ENCODE measurements at regions of chr15 and their contacts with region 1.

Region 1: DNA sequence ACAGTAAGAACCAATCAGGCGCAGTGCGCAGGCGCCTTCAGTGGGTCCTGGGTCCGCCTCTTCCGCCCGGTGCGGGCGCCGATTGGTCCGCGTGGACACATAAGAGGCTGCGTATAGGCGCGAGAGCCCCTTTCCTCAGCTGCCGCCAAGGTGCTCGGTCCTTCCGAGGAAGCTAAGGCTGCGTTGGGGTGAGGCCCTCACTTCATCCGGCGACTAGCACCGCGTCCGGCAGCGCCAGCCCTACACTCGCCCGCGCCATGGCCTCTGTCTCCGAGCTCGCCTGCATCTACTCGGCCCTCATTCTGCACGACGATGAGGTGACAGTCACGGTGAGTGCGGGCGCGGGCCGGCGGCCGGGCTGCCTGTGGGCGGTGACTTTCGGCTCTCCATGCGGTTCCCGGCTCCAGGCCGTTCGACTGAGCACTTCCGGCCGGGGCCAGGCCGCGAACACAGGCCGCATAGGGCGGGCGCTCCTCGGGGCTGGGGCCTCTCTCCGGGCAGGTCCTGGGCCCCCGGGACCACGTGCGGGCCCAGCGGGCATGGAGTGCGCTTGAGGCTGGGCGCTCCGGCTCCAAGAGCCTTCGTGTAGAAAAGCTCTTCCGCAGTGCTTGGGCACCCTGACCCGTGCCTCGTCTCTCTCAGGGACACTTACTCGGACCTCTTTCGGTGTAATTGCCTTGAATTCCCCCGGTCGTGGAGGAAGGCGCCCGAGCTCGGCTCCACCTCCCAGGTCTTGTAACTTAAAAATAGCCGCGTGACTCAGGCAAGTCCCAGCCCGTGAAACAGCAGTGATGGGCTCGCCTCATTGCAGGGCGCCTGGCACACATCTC is at the start of gene RPLP1:
- DNase-seq: peak; percentile 97
- H3K4me3 ChIP-seq: peak within 1 kb of the TSS; percentile 88 to 91
- H3K27ac ChIP-seq: peak within 1 kb of the TSS; percentile 94 to 95
- H3K4me1 ChIP-seq: peaks cover 10 to 16% of the 10 kb centered on the region in 2 experiments; a peak in 3 of 4 replicates
- H3K27me3 ChIP-seq: no peaks in the 10 kb centered on the region
- CTCF ChIP-seq: no peak
- EP300 ChIP-seq: no peak
- RAD21 ChIP-seq: no peak
- polyA plus RNA-seq, gene RPLP1: 1,514 and 1,792 TPM in 2 replicates

Region 2: DNA sequence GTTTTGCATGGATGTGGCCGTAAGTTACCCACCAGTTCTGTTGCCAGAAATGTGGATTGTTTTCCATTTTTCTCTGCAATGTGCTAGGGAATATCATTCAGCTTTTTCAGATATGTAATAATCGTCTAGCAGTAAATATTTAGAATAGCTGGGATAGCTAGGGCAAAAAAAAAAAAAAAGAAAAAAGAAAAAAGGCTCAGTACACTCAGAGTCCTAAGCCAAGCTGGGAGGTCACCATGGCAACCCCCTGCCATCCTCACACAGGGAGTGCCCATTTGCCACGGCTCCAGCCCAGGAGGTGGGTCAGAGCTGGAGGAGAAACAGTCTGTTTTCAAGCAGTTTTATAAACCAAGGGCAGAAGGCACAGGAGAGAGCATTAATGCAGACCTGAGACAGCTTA is 128.9 kb before region 1 on chr15:
- CTCF ChIA-PET with region 1: no interaction called
- POLR2A ChIA-PET with region 1: no interaction called
- DNase-seq: no peak
- H3K4me3 ChIP-seq: no peak overlapping the region
- H3K27ac ChIP-seq: no peak overlapping the region
- H3K4me1 ChIP-seq: peaks cover 0 to 17% of the 10 kb centered on the region in 2 experiments; a peak in 3 of 4 replicates
- H3K27me3 ChIP-seq: no peaks in the 10 kb centered on the region
- CTCF ChIP-seq: no peak
- EP300 ChIP-seq: no peak
- RAD21 ChIP-seq: no peak

Region 3: DNA sequence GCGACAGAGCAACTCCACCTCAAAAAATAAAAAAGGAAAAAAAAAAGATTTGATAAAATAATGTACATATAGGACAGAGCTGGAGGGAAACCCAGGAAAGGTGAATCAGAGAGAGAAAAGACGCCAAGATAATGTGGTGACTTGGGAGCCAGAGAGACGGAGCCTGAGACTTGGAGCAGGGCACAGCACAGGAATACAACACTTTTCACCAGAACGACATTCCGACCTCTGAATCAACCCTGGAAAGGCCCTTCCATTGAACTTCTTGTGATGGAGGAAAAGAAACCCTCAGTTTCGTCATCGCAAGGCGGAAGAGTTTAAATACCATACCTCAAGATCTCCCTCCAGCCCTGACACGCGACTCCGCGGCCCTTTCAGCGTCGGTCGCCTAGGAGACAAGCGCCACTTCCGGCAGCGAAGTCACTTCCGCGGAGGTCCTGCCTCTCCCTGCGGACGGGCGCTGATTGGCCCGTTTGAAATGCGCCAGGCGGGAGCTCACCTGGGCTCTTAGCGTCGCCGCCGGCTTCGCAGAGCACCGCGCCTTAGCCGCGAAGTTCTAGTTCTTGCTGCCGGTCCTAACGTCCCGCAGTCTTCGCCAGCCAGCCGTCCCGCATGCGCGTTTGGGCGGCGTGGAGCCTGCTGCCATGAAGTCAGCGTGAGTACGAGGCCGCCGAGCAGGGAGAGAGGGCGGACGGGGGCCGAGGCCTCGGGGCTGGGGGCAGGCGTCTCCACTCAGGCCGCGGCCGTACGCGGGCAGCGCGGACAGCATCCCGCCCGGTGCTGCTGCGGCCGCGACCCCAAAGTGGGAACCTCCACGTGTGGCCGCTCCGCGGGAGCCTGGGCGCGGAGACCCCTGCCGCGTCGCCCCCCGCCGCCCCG is 38.8 kb before region 1 on chr15 and contains the start of gene KIF23:
- CTCF ChIA-PET with region 1: no interaction called
- POLR2A ChIA-PET with region 1: interaction called, 14 read pairs
- DNase-seq: peak; percentile 95
- H3K4me3 ChIP-seq: peak within 1 kb of the TSS; percentile 82 to 95
- H3K27ac ChIP-seq: peak within 1 kb of the TSS; percentile 85 to 86
- H3K4me1 ChIP-seq: peaks cover 10 to 22% of the 10 kb centered on the region in 2 experiments; a peak in 3 of 4 replicates
- H3K27me3 ChIP-seq: no peaks in the 10 kb centered on the region
- CTCF ChIP-seq: no peak
- EP300 ChIP-seq: no peak
- RAD21 ChIP-seq: no peak
- polyA plus RNA-seq, gene KIF23: 23.3 and 25.8 TPM in 2 replicates

Region 4: GRCh38 chr15:69568173-69569020 is 115.5 kb after region 1 on chr15:
- CTCF ChIA-PET with region 1: no interaction called
- POLR2A ChIA-PET with region 1: no interaction called
- DNase-seq: peak; percentile 27
- H3K4me3 ChIP-seq: no peak overlapping the region
- H3K27ac ChIP-seq: no peak overlapping the region; a peak in 1 of 4 replicates
- H3K4me1 ChIP-seq: 0 out of 4 replicates have a peak, but pooled peaks cover 0 to 4% of the 10 kb centered on the region in 2 experiments
- H3K27me3 ChIP-seq: 0 out of 2 replicates have a peak, but pooled peaks cover 7% of the 10 kb centered on the region
- CTCF ChIP-seq: no peak
- EP300 ChIP-seq: no peak
- RAD21 ChIP-seq: no peak

Region 5: DNA sequence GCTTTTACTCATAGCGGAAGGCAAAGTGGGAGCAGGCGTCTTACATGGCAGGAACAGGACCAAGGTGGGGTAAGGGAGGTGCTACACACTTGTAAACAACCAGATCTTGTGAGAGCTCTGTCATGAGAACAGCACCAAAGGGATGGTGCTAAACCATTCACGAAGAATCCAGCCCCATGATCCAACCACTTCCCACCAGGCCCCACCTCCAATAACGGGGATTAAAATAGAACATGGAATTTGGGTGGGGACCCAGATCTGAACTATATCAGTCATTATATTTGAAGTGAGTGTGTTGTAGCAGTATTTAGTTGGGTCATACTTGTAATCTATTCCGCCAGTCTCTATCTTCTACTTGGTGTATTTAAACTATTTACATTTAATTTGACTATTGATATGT is 190.6 kb after region 1 on chr15:
- CTCF ChIA-PET with region 1: no interaction called
- POLR2A ChIA-PET with region 1: no interaction called
- DNase-seq: no peak
- H3K4me3 ChIP-seq: no peak overlapping the region
- H3K27ac ChIP-seq: no peak overlapping the region
- H3K4me1 ChIP-seq: peaks cover 0 to 6% of the 10 kb centered on the region in 2 experiments; a peak in 1 of 4 replicates
- H3K27me3 ChIP-seq: peaks cover 18% of the 10 kb centered on the region; the same call in 1 of the 2 replicates
- CTCF ChIP-seq: no peak
- EP300 ChIP-seq: no peak
- RAD21 ChIP-seq: no peak